ENCODE measurements at regions of chr16 and their contacts with region 1.

Region 1: GRCh38 chr16:55828680-55829079 is 4.2 kb downstream of the CES1 start:
- DNase-seq: no peak
- ATAC-seq: no peak
- H3K4me3 ChIP-seq: no peak overlapping the region
- H3K4me3 Mint-ChIP-seq: no peak overlapping the region
- H3K27ac ChIP-seq: no peak overlapping the region
- H3K27ac Mint-ChIP-seq: no peak overlapping the region
- H3K4me1 ChIP-seq: no peaks in the 10 kb centered on the region
- H3K4me1 Mint-ChIP-seq: no peaks in the 10 kb centered on the region
- H3K27me3 ChIP-seq: peaks cover 2% of the 10 kb centered on the region
- H3K27me3 Mint-ChIP-seq: peaks cover 3 to 17% of the 10 kb centered on the region in 2 donors
- CTCF ChIP-seq: no peak

Region 2: DNA sequence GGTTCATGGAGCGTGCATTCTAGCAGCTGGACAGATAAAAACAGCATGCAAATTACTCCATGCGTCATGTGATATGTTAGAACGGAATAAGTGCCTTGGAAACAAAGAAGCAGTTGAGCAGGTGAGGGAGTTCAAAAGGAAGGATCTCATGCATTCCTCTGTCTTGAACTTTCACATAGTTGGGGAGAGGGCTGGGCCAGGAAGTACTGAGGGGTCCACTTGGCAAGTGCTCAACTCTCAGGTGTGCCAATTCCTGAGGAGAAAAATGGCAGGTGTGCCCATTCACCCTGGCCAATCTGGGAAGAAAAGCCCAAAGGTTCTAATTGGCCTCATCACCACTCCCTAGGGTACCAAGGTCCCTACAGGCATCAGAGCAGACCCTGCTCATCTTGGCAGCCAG is 63.5 kb before region 1 on chr16:
- intact Hi-C with region 1: loop called (anchors 1 kb)
- DNase-seq: no peak
- ATAC-seq: no peak
- H3K4me3 ChIP-seq: no peak overlapping the region
- H3K4me3 Mint-ChIP-seq: no peak overlapping the region
- H3K27ac ChIP-seq: no peak overlapping the region
- H3K27ac Mint-ChIP-seq: no peak overlapping the region
- H3K4me1 ChIP-seq: no peaks in the 10 kb centered on the region
- H3K4me1 Mint-ChIP-seq: no peaks in the 10 kb centered on the region
- H3K27me3 ChIP-seq: no peaks in the 10 kb centered on the region
- H3K27me3 Mint-ChIP-seq: peaks cover 0 to 16% of the 10 kb centered on the region in 2 donors
- CTCF ChIP-seq: no peak